ENCODE measurements at regions of chr2 and their contacts with region 1.

Region 1: GRCh38 chr2:40244675-40245074 is 207.2 kb downstream of the SLC8A1 start:
- DNase-seq: no peak
- H3K4me3 ChIP-seq: no peak overlapping the region
- H3K27ac ChIP-seq: no peak overlapping the region
- H3K27me3 ChIP-seq: no peaks in the 10 kb centered on the region
- CTCF ChIP-seq: peak; percentile 71

Region 2: DNA sequence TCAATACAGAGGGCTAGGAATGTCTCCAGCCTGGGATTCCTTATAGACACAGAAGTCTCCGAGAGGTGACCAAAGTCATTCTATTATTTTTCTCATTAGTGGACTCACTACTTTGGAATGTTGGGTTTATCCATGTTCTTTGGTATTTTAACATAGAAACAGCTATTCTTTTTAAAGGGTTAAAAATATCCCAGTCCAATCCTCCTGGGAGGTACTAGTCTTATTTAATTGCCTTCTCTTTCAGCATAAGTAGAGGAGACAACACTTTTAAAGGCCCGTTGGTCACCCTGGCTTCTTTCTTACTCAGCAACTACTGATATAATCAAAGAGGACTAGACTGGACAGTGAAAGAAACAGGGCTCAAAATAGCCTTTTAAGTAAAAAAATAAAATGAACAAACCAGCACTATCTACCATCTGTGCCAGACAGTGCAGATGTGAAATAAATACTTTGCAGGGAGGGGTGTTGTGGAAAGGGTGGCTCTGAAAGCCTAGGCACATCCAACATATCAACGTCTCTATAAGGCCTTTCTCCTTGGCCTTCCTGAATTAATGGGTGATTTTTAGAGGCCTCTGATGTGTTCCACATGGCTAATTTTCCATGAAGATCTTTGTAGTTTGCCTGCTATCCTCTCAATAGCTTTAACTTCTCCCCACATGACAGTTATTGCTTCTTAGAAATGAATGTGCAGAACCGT is 131.3 kb before region 1 on chr2:
- CTCF ChIA-PET with region 1: no interaction called
- POLR2A ChIA-PET with region 1: no interaction called
- DNase-seq: no peak
- H3K4me3 ChIP-seq: no peak overlapping the region
- H3K27ac ChIP-seq: no peak overlapping the region
- H3K27me3 ChIP-seq: no peaks in the 10 kb centered on the region
- CTCF ChIP-seq: no peak

Region 3: GRCh38 chr2:40202798-40203400 is 41.8 kb before region 1 on chr2:
- CTCF ChIA-PET with region 1: interaction called, 15 read pairs
- POLR2A ChIA-PET with region 1: no interaction called
- DNase-seq: no peak
- H3K4me3 ChIP-seq: no peak overlapping the region
- H3K27ac ChIP-seq: no peak overlapping the region
- H3K27me3 ChIP-seq: no peaks in the 10 kb centered on the region
- CTCF ChIP-seq: no peak